ENCODE measurements at regions of chr20 and their contacts with region 1.

Region 1: GRCh38 chr20:61786230-61786629 is 279.5 kb downstream of the TAF4 start:
- DNase-seq: no peak
- H3K4me3 ChIP-seq: no peak overlapping the region
- H3K27ac ChIP-seq: no peak overlapping the region
- H3K4me1 ChIP-seq: no peaks in the 10 kb centered on the region
- H3K27me3 ChIP-seq: peaks cover 10% of the 10 kb centered on the region
- CTCF ChIP-seq: no peak
- EP300 ChIP-seq: no peak
- POLR2A ChIP-seq: no peak

Region 2: GRCh38 chr20:59891581-59891980 is 1894.6 kb before region 1 on chr20:
- in situ Hi-C with region 1: no loop called
- intact Hi-C with region 1: no loop called
- DNase-seq: no peak
- H3K4me3 ChIP-seq: no peak overlapping the region
- H3K27ac ChIP-seq: no peak overlapping the region
- H3K4me1 ChIP-seq: no peaks in the 10 kb centered on the region
- H3K27me3 ChIP-seq: no peaks in the 10 kb centered on the region
- CTCF ChIP-seq: no peak
- EP300 ChIP-seq: no peak
- POLR2A ChIP-seq: no peak

Region 3: DNA sequence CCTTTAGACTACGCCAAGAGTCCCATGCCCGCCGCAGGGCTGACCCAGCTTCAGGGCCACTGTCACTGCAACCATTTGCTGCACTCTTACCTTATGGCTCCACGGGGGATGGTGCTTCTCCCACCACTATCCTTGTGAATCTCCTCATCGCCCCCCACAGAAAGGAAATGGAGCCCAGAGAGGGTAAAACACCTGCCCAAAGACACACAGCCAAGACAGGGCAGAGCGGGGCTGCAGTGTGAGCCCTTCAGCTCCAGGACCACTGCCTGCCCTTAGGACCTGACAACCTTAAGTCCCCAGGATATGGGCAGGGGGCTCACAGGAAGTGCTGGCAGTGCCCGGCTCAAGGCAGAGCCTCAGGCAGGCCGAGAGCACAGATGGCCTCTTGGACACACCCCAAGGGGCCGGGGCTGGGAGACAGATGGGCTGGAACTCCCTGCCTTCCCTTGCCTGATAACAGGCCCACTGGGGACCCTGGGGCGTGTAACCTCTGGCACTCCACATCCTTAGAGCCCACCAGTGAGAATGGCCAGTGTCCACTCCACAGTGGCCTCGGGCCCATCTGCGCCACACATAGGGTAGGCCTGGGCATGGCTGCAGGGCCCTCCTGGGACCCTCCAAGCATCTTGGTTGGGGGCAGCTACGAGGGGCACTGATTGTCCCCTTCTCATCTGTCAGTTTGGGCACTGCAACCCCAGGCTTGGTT is 14.3 kb after region 1 on chr20:
- in situ Hi-C with region 1: no loop called
- intact Hi-C with region 1: loop called (anchors 1 kb)
- DNase-seq: no peak
- H3K4me3 ChIP-seq: no peak overlapping the region
- H3K27ac ChIP-seq: no peak overlapping the region
- H3K4me1 ChIP-seq: no peaks in the 10 kb centered on the region
- H3K27me3 ChIP-seq: peaks cover 18% of the 10 kb centered on the region
- CTCF ChIP-seq: no peak
- EP300 ChIP-seq: no peak
- POLR2A ChIP-seq: no peak

Region 4: DNA sequence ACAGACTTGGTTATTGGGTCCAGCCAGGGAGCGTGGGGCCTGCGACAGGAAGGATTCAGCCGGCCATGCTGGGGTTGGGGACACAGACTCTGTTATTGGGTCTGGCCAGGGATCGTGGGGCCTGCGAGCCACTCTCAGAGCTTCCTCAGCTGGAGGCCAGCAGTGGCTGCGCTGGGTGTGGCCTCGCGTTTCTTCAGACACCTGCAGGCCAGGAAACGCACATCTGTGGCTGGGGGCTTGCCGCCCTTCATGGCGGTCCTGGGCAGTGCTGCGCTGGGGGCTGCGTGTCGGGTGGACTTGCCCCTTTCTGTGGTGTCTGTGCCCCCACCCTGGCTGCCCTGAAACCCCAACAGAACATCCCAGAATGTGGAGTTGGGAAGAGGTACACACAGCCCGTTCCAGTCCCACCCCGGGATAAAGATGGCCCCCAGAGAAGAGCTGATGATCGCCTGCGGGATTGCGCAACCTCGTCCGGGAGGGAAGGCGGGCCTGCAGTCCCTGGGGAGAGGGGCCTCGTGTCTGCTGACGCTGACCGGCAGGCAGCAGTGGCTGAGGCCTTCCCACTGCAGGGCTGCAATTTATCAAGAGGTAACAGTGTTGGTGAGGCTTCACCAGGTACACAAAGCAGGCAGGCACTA is 379.7 kb after region 1 on chr20:
- in situ Hi-C with region 1: no loop called
- intact Hi-C with region 1: no loop called
- DNase-seq: no peak
- H3K4me3 ChIP-seq: no peak overlapping the region
- H3K27ac ChIP-seq: no peak overlapping the region
- H3K4me1 ChIP-seq: no peaks in the 10 kb centered on the region
- H3K27me3 ChIP-seq: no peaks in the 10 kb centered on the region
- CTCF ChIP-seq: no peak
- EP300 ChIP-seq: no peak
- POLR2A ChIP-seq: no peak